AG04449 (cell line): ENCODE measurements at regions of chr12 and their contacts with region 1.

Region 1: DNA sequence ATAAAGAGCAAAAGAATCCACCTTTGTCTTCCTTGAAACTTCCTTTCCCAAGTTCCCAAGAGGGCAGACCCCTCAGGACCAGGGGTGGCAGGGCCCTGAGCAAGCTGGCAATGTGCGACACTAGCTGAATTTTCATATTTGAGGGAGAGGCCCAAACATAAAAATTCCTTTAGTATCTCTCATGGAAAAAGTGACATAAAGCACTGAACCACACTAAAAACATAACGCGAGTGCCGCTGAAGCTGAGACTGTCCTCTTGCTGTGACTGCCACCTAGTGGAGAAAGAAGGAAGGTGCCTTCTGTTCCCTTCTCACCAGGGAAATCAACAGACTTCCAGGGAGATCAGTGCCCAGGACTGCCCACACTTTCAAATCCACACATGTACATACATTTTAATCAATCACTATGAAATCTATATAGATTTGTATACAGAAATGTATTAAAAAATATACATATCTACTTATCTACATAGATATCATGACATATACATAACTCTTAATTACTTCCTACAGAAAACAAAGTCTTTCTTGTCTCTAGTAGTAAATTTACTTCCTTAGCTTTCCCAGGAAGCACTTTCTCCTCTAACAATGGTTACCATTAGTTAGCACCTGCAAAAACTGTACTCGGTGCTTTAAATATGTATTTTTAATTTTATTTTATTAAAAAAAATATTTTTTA is 53.8 kb downstream of the SSH1 start:
- DNase-seq: peak; percentile 83
- H3K4me3 ChIP-seq: no peak overlapping the region
- CTCF ChIP-seq: peak; percentile 83

Region 2: GRCh38 chr12:108414021-108414420 is 389.5 kb before region 1 on chr12:
- CTCF ChIA-PET with region 1: no interaction called
- POLR2A ChIA-PET with region 1: no interaction called
- DNase-seq: no peak
- H3K4me3 ChIP-seq: no peak overlapping the region
- CTCF ChIP-seq: no peak

Region 3: DNA sequence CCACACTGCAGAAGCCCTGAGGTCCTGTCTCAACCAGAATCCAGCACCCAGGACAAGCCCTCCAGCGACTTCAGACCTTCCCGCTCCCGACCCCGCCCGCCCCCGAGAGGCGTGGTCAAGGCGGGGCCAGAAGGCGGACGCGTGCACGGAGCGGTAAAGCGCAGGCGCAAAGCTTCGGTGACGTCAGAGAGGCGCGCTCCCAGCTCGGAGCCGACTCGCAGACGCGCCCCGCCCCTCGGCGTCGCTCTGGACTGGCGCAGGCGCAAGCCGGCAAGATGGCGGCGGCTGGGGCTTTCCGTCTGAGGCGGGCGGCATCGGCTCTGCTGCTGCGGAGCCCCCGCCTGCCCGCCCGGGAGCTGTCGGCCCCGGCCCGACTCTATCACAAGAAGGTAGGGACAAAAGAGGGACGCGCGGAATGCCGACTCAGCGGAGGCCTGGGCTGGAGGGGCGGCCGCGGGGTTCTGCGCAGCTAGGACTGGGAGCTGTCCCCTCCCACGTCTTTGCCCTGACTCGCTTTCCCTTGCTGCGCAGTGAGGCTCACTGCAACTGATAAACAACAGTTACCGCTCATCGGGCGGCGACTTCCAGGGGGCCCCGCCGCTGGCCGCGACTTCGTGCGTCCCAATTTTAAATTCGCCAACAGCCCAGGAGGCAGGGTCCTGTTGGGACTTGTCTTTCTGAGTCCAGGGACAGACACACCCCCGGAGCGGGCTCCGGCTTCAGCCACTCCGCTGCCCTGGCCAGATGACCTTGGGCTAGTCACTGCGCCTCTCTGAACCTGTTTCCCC is 241.0 kb before region 1 on chr12 and contains the start of gene ISCU:
- CTCF ChIA-PET with region 1: interaction called, 44 read pairs
- POLR2A ChIA-PET with region 1: interaction called, 3 read pairs
- DNase-seq: peak; percentile 65
- H3K4me3 ChIP-seq: peak within 1 kb of the TSS; percentile 97
- CTCF ChIP-seq: no peak

Region 4: DNA sequence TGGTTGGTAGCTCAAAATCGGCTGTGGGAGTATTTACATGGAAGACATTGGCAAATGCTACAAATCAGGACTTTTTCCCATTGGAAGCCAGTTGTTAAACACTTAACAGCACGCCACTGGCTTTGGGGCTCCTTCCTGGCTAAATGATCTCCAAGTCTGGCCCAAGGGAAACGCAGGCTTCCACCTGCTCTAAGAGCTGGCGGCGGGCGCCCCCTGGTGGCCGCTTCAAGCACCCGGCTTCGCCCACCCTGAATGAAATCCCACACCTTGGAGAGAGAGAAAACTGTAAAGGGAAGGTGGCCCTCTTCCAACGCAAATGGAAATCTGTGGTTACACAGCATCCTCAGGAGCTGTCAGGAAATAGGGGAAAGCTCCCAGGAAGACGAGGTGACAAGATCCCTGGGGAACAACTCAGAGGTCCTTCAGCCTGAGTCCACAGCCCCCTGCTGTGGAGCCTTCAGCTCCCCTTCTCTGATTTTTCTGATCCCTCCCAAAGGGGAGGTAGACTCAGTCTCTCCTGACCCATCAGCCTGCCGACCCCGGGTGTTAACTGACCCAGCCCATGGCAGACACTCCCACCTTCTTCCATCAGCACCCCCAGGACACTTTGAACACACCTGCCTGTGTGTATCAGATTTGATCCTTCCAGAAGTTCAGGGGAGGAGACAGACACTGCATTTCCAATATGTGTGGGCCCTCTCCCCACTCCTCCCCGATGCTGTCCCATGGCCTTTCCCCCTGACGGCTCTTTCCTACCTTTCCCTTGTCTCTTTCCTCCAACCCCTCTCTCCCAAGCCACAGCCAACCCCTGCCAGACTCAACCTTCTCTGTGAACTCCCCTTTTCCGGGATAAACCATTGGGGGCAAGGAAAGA is 185.3 kb before region 1 on chr12:
- CTCF ChIA-PET with region 1: interaction called, 28 read pairs
- POLR2A ChIA-PET with region 1: no interaction called
- DNase-seq: peak; percentile 17
- H3K4me3 ChIP-seq: no peak overlapping the region
- CTCF ChIP-seq: peak; percentile 91

Region 5: DNA sequence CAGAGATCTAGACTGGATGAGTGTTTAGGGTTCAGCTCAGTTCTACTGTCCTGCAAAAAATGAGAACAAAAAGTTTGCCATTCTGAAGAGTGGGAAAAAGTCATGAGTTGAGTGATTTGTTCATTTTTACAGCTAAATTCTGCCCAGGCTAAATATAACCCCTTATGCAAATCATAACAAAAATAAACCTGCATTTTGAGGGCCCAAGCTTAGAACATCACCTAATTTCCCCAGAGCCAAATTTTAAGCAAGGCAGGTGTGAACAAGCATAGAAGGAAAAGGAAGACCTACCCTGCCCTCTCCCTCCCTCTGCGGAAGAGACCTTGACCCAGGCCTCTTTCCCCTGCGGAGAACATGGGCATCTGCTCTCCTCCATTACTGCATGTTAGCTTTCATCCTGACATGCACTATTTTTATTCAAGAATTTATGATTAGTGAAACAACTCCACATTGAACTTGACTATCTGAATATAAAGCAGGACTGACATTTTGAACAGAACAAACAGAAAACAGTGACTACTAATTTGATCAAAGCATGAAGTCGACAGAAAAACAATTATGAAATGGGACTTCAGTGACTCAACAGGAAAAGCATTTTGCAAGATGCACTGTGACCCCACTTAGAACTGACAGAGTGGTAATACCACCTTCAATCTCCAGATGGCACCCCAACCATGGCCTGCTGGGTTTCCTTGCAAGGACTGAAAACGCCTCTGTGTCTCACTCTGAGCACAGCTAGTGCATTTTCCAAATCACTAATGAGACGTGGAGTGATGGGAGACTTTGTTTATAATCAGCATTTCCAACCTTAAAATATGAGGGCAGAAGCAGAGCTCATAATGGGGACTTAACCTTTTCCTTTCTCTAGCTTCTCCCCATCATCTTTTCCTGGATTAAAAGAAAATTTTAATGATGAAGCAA is 139.0 kb before region 1 on chr12:
- CTCF ChIA-PET with region 1: interaction called, 81 read pairs
- POLR2A ChIA-PET with region 1: no interaction called
- DNase-seq: peak; percentile 81
- H3K4me3 ChIP-seq: no peak overlapping the region
- CTCF ChIP-seq: peak; percentile 79

Region 6: DNA sequence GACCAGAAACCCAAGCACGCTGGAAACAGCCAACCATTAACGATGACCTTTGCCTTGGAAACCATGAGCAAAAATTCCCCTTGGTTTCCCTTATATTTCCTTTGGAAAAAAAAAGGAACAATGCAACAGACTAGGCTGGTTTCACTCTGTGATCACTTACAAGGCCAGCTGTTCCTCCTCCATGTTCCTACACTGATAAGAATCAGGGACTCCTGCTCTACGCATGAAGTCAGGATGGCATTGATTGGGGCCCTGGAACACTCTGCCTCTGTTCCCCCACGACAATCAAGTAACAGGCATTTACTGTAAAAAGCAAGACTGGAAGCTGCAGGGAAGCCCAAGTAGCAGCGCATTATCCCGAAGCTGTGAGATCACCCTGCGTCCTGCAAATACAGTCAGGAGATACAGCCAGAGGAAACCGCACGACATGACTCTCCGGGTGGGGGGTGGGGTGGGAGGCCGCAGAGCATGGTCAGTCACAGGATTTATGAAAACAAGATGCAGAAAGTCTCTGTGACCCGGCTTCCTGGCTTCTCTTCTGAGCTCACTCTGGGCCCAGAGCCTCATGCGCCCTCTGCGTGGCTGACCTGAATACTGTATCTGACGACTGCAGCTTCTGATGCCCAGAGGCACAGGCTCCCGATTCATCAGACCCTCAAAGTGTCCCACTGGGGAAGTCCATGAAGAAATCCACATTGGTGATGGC is 22.7 kb after region 1 on chr12:
- CTCF ChIA-PET with region 1: interaction called, 53 read pairs
- POLR2A ChIA-PET with region 1: interaction called, 25 read pairs
- DNase-seq: peak; percentile 91
- H3K4me3 ChIP-seq: peak overlapping the region; percentile 38
- CTCF ChIP-seq: peak; percentile 28

Region 7: DNA sequence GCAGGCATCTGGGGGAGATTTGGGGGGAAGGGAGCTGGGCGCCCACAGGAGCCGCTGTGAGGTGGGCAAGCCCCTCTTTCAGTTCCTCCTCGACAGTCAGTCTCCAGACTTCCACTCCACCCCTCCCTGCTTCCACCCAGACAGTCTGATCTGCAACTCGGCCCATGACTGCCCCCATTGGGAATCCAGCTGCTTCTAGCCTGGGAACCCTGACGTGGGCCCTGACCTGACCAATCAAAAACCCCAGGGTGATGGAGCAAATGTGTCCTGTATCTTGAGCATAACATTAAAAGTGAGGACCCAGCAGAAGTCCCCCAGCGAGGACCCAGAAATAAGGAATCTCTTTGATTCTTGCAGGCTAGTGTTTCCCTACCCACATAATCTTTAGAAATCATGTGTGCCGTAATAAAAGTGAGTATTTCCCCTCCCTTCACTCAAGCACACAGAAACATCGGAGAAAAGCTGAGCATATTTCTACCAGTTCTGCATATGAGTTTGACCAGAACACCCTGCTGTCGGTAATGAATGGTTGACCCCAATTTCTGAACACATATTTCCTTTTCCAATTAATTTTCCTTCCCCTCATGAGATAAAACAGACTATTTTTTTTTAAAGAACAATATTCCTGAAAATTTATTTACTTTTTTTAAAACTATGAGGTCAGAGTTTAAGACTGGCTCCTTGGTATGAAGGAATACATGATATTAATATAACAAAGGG is 47.4 kb after region 1 on chr12:
- CTCF ChIA-PET with region 1: interaction called, 18 read pairs
- POLR2A ChIA-PET with region 1: interaction called, 8 read pairs
- DNase-seq: no peak
- H3K4me3 ChIP-seq: no peak overlapping the region
- CTCF ChIP-seq: peak; percentile 44

Region 8: DNA sequence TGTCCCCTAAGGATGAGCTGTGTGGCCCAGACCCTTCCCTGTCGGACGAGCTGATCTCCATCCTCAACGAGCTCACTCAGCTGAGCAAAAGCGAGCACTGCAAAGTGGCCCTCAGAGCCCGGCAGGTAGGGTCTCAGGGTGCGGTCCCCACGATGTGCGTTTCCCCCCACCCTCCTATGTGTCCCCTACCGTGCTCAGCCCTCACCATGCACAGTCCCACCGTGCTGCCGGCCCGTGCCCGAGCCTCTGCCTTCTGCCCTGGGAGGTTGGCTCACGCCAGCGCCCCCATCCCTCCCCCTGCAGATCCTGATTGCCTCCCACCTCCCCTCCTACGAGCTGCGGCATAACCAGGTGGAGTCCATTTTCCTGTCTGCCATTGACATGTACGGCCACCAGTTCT is 418.9 kb after region 1 on chr12:
- CTCF ChIA-PET with region 1: no interaction called
- POLR2A ChIA-PET with region 1: no interaction called
- DNase-seq: no peak
- H3K4me3 ChIP-seq: no peak overlapping the region
- CTCF ChIP-seq: no peak